AG04450 (cell line): ENCODE measurements at regions of chr20 and their contacts with region 1.

Region 1: GRCh38 chr20:51695574-51696303 is 72.5 kb downstream of the ATP9A start:
- DNase-seq: peak; percentile 59
- H3K4me3 ChIP-seq: peak overlapping the region; percentile 29
- H3K27ac ChIP-seq: peak overlapping the region; percentile 92
- H3K27me3 ChIP-seq: no peaks in the 10 kb centered on the region
- CTCF ChIP-seq: no peak

Region 2: GRCh38 chr20:51710361-51710894 is 14.7 kb after region 1 on chr20:
- CTCF ChIA-PET with region 1: interaction called, 10 read pairs
- POLR2A ChIA-PET with region 1: no interaction called
- DNase-seq: no peak
- H3K4me3 ChIP-seq: no peak overlapping the region
- H3K27ac ChIP-seq: no peak overlapping the region
- H3K27me3 ChIP-seq: no peaks in the 10 kb centered on the region
- CTCF ChIP-seq: 0 out of 2 replicates have a peak, but pooled peaks have one; percentile 3

Region 3: GRCh38 chr20:51732096-51732791 is 36.5 kb after region 1 on chr20:
- CTCF ChIA-PET with region 1: interaction called, 13 read pairs
- POLR2A ChIA-PET with region 1: no interaction called
- DNase-seq: no peak
- H3K4me3 ChIP-seq: peak overlapping the region; percentile 52
- H3K27ac ChIP-seq: peak overlapping the region; percentile 93
- H3K27me3 ChIP-seq: no peaks in the 10 kb centered on the region
- CTCF ChIP-seq: no peak

Region 4: DNA sequence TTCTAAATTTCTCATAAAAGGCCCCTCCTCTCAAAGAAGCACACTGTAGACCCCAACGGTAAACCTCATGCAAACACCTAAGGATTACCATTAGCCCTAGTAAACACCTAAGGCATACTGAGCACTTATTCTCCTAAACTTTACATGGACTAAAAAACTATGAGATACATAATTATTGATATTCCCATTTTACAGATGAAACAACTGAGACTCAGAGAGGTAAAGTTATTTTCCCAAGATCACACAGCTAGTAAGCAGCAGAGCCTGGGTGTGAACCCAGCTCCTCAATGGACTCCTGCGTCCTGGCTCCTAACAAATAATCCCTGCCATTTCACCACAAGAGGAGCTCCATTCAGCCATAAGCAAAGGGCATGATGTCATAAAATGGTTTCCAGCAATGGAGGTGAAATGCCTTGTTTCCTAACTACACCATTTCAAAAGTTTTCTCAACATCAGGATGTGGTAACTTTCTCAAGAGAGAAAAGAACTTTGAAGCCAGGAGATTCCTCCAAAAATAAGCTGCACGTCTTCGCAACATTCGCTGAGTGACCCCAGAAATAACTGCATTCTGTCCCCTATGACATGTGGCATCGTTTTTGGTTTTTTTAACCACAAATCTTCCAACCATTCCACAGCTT is 68.3 kb after region 1 on chr20:
- CTCF ChIA-PET with region 1: interaction called, 11 read pairs
- POLR2A ChIA-PET with region 1: no interaction called
- DNase-seq: no peak
- H3K4me3 ChIP-seq: no peak overlapping the region
- H3K27ac ChIP-seq: no peak overlapping the region
- H3K27me3 ChIP-seq: no peaks in the 10 kb centered on the region
- CTCF ChIP-seq: 0 out of 2 replicates have a peak, but pooled peaks have one; percentile 18

Region 5: GRCh38 chr20:51894619-51895018 is 198.9 kb after region 1 on chr20:
- CTCF ChIA-PET with region 1: no interaction called
- POLR2A ChIA-PET with region 1: no interaction called
- DNase-seq: no peak
- H3K4me3 ChIP-seq: no peak overlapping the region
- H3K27ac ChIP-seq: no peak overlapping the region
- H3K27me3 ChIP-seq: no peaks in the 10 kb centered on the region
- CTCF ChIP-seq: no peak

Region 6: DNA sequence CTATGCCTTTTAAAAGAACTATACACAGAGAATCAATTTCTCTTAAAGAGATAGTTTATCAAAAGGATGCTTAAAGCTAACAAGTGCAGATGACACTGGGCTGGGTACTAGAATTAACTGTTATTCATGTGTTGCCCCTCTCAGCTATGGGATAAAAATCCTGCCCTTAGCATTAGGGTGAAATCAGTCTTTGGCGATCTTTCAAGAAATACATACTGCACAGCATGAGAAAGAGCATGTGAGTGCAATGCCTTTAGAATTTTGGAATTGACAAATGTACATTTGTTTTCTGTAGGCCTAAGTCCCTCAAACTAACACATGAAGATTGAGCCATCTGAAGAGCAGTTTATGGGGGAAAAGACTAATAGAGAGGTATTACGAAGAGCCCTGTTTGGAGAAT is 380.4 kb after region 1 on chr20:
- CTCF ChIA-PET with region 1: interaction called, 12 read pairs
- POLR2A ChIA-PET with region 1: no interaction called
- DNase-seq: no peak
- H3K4me3 ChIP-seq: no peak overlapping the region
- H3K27ac ChIP-seq: no peak overlapping the region
- H3K27me3 ChIP-seq: no peaks in the 10 kb centered on the region
- CTCF ChIP-seq: no peak

Region 7: DNA sequence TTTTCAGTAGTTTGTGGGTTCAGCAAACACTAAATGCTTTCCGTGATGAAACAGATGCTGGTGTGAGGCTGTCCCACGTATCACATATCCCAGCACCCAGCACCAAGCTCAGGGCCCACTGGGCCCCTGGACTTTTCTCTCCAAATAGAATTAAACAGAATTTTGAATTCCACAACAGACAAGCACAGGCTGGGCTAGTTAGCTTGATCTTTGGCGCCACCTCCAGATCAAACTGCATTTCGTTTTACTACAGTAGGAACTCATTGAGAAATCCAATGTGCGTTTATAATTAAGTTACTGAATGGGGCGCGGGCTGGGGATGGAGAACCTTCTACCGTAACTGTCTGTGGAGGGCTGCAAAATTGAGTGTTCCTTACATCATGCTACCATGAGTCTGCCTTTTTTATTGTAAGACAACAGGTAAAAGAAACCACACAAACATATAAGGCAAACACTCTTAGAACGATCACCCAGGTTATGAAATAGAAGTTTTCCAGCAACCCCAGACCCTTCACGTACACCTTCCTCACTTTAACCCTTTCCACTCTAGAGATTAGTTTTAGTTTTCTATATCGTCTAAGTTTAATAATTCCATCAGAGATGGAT is 388.0 kb after region 1 on chr20:
- CTCF ChIA-PET with region 1: interaction called, 23 read pairs
- POLR2A ChIA-PET with region 1: no interaction called
- DNase-seq: peak; percentile 54
- H3K4me3 ChIP-seq: no peak overlapping the region
- H3K27ac ChIP-seq: no peak overlapping the region
- H3K27me3 ChIP-seq: no peaks in the 10 kb centered on the region
- CTCF ChIP-seq: peak; percentile 72